ENCODE measurements at regions of chr7 and their contacts with region 1.

Region 1: DNA sequence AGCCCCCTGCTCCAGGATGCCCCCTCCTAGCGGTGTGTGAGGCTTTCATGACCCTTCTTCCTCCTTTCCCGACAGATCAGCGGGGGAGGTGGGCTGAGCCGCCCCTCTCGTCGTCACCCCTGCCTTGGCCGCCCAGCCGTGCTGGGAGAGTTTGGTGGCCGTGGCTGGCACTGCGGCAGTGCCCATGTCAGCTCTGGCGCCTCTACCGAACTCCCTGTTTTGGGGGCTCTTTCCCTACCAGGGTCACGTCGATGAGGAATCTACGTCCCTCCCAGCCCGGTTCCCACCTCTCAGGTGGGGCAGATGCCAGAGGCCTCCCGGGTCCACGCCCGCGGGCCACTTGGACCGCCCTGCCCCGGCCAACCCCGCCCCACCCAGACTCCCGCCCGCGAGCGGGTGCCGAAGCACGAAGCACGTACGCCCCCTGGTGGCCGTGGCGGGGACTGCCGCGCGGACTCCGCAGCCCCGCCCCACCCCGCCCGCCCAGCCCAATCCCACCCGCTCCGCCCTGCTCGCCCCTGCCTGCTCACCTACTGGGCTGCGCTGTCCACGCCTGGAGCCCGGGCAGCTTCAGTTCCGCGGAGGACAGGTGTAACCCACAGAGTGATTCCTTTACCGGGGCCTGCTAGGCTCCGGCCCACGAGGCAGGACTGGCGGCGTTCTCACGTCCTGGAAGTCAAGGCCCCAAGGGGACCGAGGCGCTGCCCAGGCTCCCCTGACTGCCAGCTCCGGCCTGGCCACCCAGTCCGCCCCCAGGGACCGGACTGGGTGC is 127.1 kb downstream of the UBE2H start:
- DNase-seq: peak; percentile 70 to 95
- H3K4me3 ChIP-seq: peak overlapping the region; percentile 88
- H3K27ac ChIP-seq: peak overlapping the region; percentile 91
- H3K4me1 ChIP-seq: peaks cover 23% of the 10 kb centered on the region
- H3K27me3 ChIP-seq: no peaks in the 10 kb centered on the region
- CTCF ChIP-seq: peak; percentile 70

Region 2: DNA sequence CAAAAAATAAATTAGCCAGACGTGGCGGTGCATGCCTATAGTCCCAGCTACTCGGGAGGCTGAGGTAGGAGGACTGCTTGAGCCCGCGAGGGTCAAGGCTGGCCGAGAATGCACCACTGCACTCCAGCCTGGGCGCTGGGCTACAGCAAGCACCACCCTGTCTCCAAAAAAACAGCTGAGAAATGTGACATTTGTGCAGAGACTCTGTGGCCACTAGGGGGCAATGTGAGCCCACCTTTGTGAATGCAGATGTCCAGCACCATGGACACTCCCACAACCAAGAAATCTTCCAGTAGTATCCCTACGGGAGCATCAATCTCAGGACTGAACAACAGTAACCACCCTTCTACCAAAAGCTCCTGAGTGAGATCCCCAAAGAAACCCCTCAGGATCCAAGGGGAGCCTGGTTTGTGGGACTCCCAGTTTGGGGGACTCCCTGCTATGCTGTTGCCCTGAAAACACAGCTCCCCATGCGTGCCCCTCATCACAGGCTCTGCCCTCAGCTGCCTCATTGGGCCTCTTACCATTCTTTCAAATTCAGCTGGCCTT is 607.1 kb before region 1 on chr7:
- CTCF ChIA-PET with region 1: no interaction called
- POLR2A ChIA-PET with region 1: no interaction called
- intact Hi-C with region 1: loop called (anchors 2 kb)
- DNase-seq: peak; percentile 59 to 82
- H3K4me3 ChIP-seq: no peak overlapping the region
- H3K27ac ChIP-seq: no peak overlapping the region
- H3K4me1 ChIP-seq: peaks cover 4% of the 10 kb centered on the region
- H3K27me3 ChIP-seq: no peaks in the 10 kb centered on the region
- CTCF ChIP-seq: peak; percentile 93

Region 3: GRCh38 chr7:129224251-129225205 is 601.2 kb before region 1 on chr7 and contains the start of gene AHCYL2:
- CTCF ChIA-PET with region 1: no interaction called
- POLR2A ChIA-PET with region 1: interaction called, 9 read pairs
- intact Hi-C with region 1: loop called (anchors 2 kb)
- DNase-seq: peak; percentile 95 to 98
- H3K4me3 ChIP-seq: peak within 1 kb of the TSS; percentile 75
- H3K27ac ChIP-seq: peak within 1 kb of the TSS; percentile 74
- H3K4me1 ChIP-seq: peaks cover 19% of the 10 kb centered on the region
- H3K27me3 ChIP-seq: no peaks in the 10 kb centered on the region
- CTCF ChIP-seq: no peak
- total RNA-seq, gene AHCYL2: 15.7 and 16.2 TPM in 2 replicates

Region 4: DNA sequence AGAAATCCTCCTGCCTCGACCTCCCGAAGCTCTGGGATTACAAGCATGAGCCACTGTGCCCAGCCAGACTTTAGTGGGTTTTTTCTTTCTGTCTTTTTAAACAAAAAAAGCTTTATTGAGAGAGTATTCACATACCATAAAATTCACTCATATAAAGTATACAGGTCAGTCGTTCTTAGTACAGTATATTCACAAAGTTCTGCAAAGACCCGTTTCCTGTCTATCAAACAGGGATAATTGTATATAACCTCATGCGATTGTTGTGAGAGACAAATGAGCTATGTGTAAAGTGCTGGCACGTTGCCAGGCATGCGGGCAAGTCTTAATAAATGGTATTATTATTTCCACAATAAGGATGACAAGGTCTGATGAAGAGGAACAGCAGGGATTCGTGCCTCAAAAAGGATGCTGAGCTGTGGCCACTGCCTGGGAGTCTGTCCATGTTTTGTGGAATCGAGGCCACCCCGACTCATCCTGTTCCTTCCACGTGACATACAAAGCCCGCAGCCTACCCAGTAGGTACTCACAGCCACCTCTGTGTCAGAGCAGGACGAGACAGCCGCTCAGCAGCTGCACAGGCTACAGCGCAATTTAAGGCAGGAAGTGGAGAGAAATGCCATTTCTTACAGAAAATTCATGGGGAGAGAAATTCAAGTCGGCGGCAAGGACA is 271.7 kb before region 1 on chr7:
- CTCF ChIA-PET with region 1: no interaction called
- POLR2A ChIA-PET with region 1: no interaction called
- intact Hi-C with region 1: no loop called
- DNase-seq: no peak
- H3K4me3 ChIP-seq: no peak overlapping the region
- H3K27ac ChIP-seq: no peak overlapping the region
- H3K4me1 ChIP-seq: no peaks in the 10 kb centered on the region
- H3K27me3 ChIP-seq: no peaks in the 10 kb centered on the region
- CTCF ChIP-seq: no peak

Region 5: DNA sequence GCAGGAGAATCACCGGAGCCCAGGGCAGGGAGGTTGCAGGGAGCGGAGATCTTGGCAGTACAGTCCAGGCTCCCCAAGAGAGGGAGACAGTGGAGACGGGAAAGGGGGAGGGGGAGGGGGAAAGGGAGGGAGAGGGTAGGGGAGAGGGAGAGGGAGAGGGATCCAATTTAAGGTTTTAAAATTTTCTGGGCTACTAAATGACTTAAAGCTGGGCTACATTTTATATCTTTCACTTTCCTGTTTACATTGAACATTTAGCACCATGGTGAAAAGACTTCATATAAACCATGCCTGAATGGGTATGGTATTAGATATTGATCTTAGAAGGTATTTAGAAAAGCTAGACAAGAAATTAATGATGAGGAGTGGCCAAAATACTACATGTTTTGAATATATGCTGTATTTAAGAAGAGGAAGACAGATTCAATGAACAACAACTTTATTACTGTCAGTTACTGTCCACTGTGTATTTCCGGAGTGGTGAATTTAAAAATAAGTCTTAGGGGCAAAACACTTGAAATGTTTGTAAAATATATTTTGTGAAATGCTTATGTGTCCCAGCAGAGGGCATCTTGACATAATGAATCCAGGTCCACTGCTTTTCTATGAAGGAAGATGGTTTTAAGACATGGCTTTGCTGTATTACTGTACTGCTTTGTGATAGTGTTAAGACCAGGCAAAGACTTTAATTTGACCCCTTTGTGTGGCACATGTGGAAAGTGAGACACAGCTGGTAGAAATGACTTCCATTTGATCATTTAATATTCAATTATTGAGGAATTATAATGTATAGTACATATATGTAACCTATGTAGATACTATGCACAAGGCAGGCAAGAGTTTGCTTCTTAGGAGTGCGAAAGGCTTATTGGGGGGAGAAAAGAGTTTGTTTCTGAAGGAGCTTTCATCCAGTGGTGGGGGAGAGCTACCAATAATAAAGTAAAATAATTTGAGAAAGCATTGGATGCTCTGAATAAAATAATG is 161.4 kb before region 1 on chr7:
- CTCF ChIA-PET with region 1: interaction called, 4 read pairs
- POLR2A ChIA-PET with region 1: no interaction called
- intact Hi-C with region 1: loop called (anchors 1 kb)
- DNase-seq: peak; percentile 14 to 53
- H3K4me3 ChIP-seq: no peak overlapping the region
- H3K27ac ChIP-seq: peak overlapping the region; percentile 53
- H3K4me1 ChIP-seq: peaks cover 17% of the 10 kb centered on the region
- H3K27me3 ChIP-seq: no peaks in the 10 kb centered on the region
- CTCF ChIP-seq: peak; percentile 77

Region 6: DNA sequence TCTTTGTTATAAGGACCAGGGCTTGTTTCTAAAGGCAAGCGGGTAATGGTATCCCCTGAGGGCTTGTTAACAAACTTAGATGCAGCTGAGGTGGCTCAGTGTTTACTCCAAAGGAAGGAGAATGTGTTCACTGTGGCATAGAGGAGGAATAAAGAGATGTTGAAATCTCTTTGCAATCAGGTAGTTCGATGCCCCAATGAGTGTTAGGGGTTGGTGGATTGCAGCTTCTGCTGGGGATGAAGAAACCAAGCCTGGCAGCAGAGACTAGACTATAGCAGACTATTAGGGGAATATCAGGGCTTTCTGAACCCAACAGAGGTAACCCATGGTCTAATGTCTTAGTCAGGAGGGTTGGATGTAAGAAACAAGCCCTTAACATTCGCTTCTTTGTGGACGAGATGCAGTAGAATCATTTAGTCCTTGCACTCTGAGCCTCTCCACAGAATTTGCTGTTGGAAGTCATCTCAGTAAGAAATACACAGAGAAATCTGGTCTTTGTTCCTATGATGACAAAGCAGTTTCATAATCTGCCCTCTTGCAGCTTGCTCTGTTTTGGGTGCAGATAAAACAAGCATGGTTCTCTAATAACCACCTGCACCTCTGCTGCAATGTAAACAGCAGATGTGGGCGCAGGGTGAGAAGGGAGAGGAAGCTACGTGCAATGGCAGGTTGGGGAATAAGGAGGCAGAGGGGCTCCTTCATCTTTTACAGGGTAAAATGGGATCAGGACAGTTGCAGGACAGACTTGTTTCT is 105.5 kb before region 1 on chr7:
- CTCF ChIA-PET with region 1: no interaction called
- POLR2A ChIA-PET with region 1: no interaction called
- intact Hi-C with region 1: no loop called
- DNase-seq: no peak
- H3K4me3 ChIP-seq: no peak overlapping the region
- H3K27ac ChIP-seq: peak overlapping the region; percentile 20; the same call in 1 of the 2 replicates
- H3K4me1 ChIP-seq: peaks cover 9% of the 10 kb centered on the region
- H3K27me3 ChIP-seq: no peaks in the 10 kb centered on the region
- CTCF ChIP-seq: no peak

Region 7: DNA sequence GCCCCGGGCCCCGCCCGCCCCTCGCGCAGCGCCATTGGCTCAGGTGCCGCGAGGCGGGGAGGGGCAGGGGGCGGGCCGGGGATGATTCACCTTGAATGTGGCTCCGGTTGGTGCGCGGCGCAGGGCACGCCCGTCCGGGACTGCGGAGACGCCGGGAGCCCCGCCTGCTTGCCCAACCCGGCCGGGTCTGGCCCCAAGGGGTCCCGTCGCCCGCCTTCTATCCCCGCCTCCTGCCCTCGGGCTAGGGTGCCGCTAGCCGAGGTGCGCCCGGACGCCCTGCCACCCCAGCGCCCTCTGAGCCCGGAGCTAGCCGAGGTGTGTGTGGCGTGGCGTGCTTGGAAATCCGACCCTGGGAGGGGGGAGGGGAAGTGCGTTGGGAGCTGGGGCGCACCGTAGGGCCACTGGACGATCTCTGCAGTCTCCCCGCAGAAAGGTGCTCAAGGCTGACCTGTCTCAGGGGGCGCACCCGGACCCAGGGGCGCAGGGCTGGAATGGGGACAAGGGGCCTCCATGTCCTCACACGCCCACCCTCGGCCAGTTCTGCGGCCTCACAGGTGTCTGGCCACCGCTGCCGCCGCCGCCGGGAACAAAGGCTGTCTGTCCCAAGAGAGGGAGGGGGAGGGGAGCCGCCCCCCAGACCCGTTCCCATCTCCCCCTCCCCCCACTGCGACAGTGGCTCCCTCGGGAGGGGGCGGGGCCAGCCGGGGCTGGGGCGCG is 45.3 kb before region 1 on chr7:
- CTCF ChIA-PET with region 1: interaction called, 4 read pairs
- POLR2A ChIA-PET with region 1: interaction called, 3 read pairs
- intact Hi-C with region 1: loop called (anchors 1 kb)
- DNase-seq: peak; percentile 84 to 98
- H3K4me3 ChIP-seq: peak overlapping the region; percentile 85
- H3K27ac ChIP-seq: peak overlapping the region; percentile 21
- H3K4me1 ChIP-seq: peaks cover 17% of the 10 kb centered on the region
- H3K27me3 ChIP-seq: no peaks in the 10 kb centered on the region
- CTCF ChIP-seq: no peak

Region 8: GRCh38 chr7:129923709-129924108 is 98.0 kb after region 1 on chr7:
- CTCF ChIA-PET with region 1: interaction called, 19 read pairs
- POLR2A ChIA-PET with region 1: no interaction called
- intact Hi-C with region 1: no loop called
- DNase-seq: no peak
- H3K4me3 ChIP-seq: no peak overlapping the region
- H3K27ac ChIP-seq: no peak overlapping the region
- H3K4me1 ChIP-seq: no peaks in the 10 kb centered on the region
- H3K27me3 ChIP-seq: no peaks in the 10 kb centered on the region
- CTCF ChIP-seq: no peak

Region 9: DNA sequence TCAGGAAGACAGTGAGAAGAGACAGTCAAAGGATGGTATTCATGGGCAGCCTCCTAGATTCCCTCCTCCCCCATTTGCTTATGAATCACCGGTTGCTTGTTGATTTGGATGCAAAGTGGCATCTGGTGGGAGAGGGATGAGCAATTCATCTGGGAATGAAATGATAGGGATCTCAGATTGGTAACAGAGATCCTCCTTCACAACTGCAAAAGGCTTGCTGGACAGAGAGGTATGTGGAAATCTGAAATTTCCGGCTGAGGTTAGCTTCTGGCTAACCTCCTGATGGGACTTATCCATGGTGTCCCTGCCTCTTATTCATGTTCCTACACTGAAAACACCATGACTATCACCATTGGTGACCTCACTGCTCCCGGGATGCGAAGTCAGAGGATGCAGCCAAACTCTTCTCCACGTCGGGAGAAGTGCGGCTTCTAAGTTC is 1779.2 kb after region 1 on chr7:
- CTCF ChIA-PET with region 1: interaction called, 21 read pairs
- POLR2A ChIA-PET with region 1: no interaction called
- intact Hi-C with region 1: no loop called
- DNase-seq: peak; percentile 11 to 80
- H3K4me3 ChIP-seq: no peak overlapping the region
- H3K27ac ChIP-seq: 0 out of 2 replicates have a peak overlapping the region, but pooled peaks have one; percentile 6
- H3K4me1 ChIP-seq: peaks cover 42% of the 10 kb centered on the region
- H3K27me3 ChIP-seq: no peaks in the 10 kb centered on the region
- CTCF ChIP-seq: no peak

Measured in PC-9 (cell line).